Tibial artery (tissue), 4 donors: ENCODE measurements at regions of chr2 and their contacts with region 1.

Region 1: DNA sequence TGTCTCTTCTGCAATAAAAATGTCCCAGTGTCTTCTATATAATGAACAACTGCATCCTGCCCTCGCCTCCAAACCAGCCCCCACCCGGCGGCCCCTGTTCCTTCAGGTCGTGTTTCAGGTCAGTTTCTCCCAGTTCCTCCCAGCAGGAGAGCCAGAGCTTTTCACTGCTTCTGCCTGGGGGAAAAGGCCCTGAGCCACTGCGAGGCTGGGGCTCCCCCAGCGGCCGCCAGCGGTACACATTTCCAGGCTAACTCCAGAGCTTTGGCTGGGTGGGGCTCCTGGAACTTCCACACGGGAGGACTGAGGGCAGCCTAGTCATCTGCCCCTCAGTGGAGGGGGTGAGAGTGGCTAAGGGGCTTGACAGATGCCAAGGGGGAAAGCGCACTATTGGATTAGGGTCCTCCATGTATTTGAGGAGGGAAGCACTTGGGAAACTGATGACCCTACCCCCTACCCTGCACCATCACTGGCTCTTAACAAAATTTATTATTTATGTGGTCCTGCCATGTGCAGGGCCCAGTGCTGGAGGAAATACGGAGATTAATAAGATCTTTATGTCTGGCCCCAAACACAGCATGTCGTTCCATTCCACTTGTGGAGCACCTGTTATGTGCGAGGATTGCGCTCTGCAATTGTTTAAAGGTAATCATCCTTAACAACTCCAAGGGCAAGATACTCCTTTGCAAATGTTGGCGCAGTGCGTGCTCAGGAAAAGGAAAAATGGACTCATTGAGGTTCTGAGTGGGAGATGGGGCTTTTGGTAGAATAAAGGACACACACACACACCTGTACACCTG is 17.3 kb upstream of the CYS1 start:
- DNase-seq: peak; percentile 64 to 81
- H3K4me3 ChIP-seq: no peak overlapping the region
- H3K27ac ChIP-seq: no peak overlapping the region
- H3K4me1 ChIP-seq: peaks cover 0 to 5% (median 0%) of the 10 kb centered on the region in 4 donors
- H3K27me3 ChIP-seq: peaks cover 0 to 6% of the 10 kb centered on the region in 2 donors
- CTCF ChIP-seq: peak; percentile 90 to 98

Region 2: DNA sequence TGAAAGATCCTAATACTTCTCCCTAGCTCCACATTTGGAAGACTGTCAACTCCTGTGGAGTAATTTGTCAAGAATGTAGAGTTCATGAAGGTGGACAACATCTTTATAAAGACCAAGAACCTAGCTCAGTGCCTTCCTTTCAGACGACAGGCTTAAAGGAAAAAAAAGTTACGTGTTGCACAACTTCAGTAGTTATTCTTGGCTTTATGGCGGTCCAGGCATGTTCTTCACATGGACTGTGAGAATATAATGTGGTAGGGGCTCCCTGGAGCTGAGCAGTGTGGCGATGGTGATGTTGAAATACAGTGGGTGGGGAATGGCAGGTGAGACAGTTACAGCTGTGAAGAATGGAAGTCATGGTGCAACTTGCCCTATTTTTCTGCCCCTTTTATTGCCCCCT is 250.4 kb before region 1 on chr2:
- intact Hi-C with region 1: no loop called
- DNase-seq: no peak
- H3K4me3 ChIP-seq: no peak overlapping the region
- H3K27ac ChIP-seq: no peak overlapping the region
- H3K4me1 ChIP-seq: peaks cover 0 to 14% (median 10%) of the 10 kb centered on the region in 4 donors
- H3K27me3 ChIP-seq: no peaks in the 10 kb centered on the region
- CTCF ChIP-seq: no peak

Region 3: GRCh38 chr2:10057231-10058107 is 40.1 kb before region 1 on chr2:
- intact Hi-C with region 1: no loop called
- DNase-seq: no peak
- H3K4me3 ChIP-seq: peak overlapping the region in 1 of 2 donors; percentile 9
- H3K27ac ChIP-seq: peak overlapping the region; percentile 62 to 63
- H3K4me1 ChIP-seq: peaks cover 0 to 23% (median 13%) of the 10 kb centered on the region in 4 donors
- H3K27me3 ChIP-seq: no peaks in the 10 kb centered on the region
- CTCF ChIP-seq: no peak

Region 4: GRCh38 chr2:10072656-10073480 is 24.7 kb before region 1 on chr2:
- intact Hi-C with region 1: loop called (anchors 1 kb)
- DNase-seq: peak; percentile 84 to 86
- H3K4me3 ChIP-seq: no peak overlapping the region
- H3K27ac ChIP-seq: no peak overlapping the region
- H3K4me1 ChIP-seq: peaks cover 0 to 4% (median 4%) of the 10 kb centered on the region in 4 donors
- H3K27me3 ChIP-seq: no peaks in the 10 kb centered on the region
- CTCF ChIP-seq: peak; percentile 86 to 90